ENCODE measurements at regions of chr12 and their contacts with region 1.

Region 1: GRCh38 chr12:76083904-76084862 is at the start of gene NAP1L1:
- DNase-seq: peak; percentile 98
- ATAC-seq: peak; percentile 87
- H3K4me3 ChIP-seq: peak within 1 kb of the TSS; percentile 82
- H3K27ac ChIP-seq: peak within 1 kb of the TSS; percentile 94
- H3K4me1 ChIP-seq: peaks cover 4% of the 10 kb centered on the region
- H3K27me3 ChIP-seq: no peaks in the 10 kb centered on the region
- CTCF ChIP-seq: peak; percentile 17; the same call in 1 of the 2 replicates
- POLR2A ChIP-seq: peak; percentile 96
- RAD21 ChIP-seq: peak; percentile 34
- total RNA-seq, gene NAP1L1: 86.4 and 166 TPM in 2 replicates

Region 2: DNA sequence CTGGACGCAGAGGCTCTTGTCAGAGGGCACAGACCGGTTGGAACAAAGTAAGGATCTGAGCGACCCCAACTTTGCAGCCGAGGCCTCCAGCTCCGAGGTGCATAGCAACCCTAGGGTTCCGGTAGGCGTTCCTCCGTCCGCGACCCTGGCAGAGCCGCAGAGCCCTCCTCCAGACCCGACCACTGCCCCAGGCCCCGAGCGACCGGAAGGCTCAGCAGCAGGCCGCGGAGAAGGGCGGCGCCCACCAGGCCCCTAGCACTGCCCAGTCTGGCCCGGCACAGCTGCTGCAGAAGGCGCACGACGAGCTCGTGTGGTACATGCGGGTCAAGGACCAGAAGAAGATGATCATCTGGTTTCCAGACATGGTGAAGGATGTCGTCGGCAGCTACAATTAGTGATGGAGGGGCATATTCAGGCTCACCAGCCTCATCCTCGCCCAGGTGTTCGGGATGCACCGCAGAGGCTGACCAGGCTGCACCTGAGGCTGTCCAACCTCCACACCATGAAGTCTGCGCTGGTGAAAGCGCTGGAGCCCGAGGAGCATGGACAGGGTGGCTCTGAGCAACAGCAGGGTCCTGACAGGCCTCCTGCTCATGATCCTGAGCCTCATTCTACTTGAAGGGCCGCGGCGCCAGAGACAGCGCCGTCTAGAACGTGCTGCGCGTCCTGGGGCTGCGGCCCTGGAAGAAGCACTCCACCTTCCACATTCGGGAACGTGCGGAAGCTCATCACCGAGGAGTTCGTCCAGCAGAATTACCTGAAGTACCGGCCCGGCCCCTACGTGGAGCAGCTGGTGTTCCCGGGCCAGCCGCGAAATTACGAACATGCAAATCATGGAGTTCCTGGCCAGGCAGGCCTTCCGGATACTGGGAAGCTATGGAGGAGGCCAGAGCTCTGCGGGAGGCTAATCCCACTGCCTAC is 778.5 kb before region 1 on chr12:
- CTCF ChIA-PET with region 1: no interaction called
- POLR2A ChIA-PET with region 1: no interaction called
- dilution Hi-C with region 1: no loop called
- in situ Hi-C with region 1: no loop called
- intact Hi-C with region 1: no loop called
- DNase-seq: no peak
- ATAC-seq: no peak
- H3K4me3 ChIP-seq: no peak overlapping the region
- H3K27ac ChIP-seq: no peak overlapping the region
- H3K4me1 ChIP-seq: no peaks in the 10 kb centered on the region
- H3K27me3 ChIP-seq: no peaks in the 10 kb centered on the region
- CTCF ChIP-seq: no peak
- POLR2A ChIP-seq: no peak
- RAD21 ChIP-seq: no peak

Region 3: DNA sequence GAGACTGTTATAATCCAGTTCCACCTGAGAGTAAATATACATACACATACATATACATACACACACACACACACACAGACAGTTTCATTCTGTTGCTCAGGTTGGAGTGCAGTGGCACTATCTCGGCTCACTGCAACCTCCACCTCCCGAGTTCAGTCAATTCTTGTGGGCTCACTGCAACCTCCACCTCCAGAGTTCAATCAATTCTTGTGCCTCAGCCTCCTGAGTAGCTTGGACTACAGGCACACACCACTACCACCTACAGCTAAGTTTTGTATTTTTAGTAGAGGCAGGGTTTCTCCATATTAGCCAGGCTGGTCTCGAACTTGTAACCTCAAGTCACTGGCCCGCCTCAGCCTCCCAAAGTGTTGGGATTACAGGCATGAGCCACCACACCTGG is 43.7 kb before region 1 on chr12:
- CTCF ChIA-PET with region 1: no interaction called
- POLR2A ChIA-PET with region 1: no interaction called
- dilution Hi-C with region 1: no loop called
- in situ Hi-C with region 1: no loop called
- intact Hi-C with region 1: no loop called
- DNase-seq: no peak
- ATAC-seq: no peak
- H3K4me3 ChIP-seq: no peak overlapping the region
- H3K27ac ChIP-seq: no peak overlapping the region
- H3K4me1 ChIP-seq: peaks cover 4% of the 10 kb centered on the region
- H3K27me3 ChIP-seq: no peaks in the 10 kb centered on the region
- CTCF ChIP-seq: no peak
- POLR2A ChIP-seq: no peak
- RAD21 ChIP-seq: no peak

Region 4: DNA sequence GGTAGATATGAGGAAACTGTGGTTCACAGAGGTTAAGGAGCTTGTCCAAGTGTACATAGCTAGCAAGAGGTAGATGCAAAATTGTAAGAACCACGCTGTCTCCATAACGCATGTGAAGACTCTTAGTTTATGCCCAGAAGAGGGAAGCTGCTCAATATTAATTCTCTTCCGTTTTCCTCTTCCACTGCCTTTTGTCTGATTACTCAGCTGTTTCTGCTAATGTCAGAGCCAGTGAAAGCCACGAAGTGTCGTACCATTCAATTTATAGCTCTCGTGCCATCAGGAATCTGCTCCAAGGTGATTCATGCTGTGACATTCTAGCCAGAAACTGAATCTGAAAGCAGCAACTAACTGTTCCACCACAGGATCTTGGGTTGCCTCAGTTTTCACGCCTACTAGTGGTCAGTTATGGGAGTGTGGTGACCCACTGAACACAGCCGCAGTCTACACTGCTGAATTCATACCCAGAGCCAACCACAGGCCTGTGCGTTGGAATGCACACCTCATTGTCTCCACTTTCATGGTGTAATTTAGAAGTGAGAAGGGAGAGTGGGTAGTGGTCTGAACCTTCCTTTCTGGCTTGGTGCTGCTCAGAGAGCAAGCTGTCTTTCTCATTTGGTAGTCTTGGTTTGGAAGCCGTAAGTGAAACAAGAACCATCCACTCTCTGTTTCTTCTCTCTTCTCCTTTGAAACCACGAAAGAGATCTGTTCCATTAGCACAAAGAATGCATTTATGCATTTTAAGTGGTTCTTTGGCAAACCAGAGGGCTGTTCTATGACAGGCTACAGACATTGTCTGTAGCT is 74.5 kb after region 1 on chr12:
- CTCF ChIA-PET with region 1: interaction called, 5 read pairs
- POLR2A ChIA-PET with region 1: no interaction called
- dilution Hi-C with region 1: no loop called
- in situ Hi-C with region 1: no loop called
- intact Hi-C with region 1: loop called (anchors 2 kb)
- DNase-seq: peak; percentile 84
- ATAC-seq: peak; percentile 97
- H3K4me3 ChIP-seq: no peak overlapping the region
- H3K27ac ChIP-seq: no peak overlapping the region
- H3K4me1 ChIP-seq: peaks cover 5% of the 10 kb centered on the region; the same call in 1 of the 2 replicates
- H3K27me3 ChIP-seq: no peaks in the 10 kb centered on the region
- CTCF ChIP-seq: peak; percentile 59
- POLR2A ChIP-seq: no peak
- RAD21 ChIP-seq: peak; percentile 70

Region 5: GRCh38 chr12:76277480-76277879 is 193.3 kb after region 1 on chr12:
- CTCF ChIA-PET with region 1: interaction called, 3 read pairs
- POLR2A ChIA-PET with region 1: no interaction called
- dilution Hi-C with region 1: no loop called
- in situ Hi-C with region 1: no loop called
- intact Hi-C with region 1: loop called (anchors 5 kb)
- DNase-seq: peak; percentile 87
- ATAC-seq: peak; percentile 72
- H3K4me3 ChIP-seq: no peak overlapping the region
- H3K27ac ChIP-seq: peak overlapping the region; percentile 52
- H3K4me1 ChIP-seq: peaks cover 27% of the 10 kb centered on the region
- H3K27me3 ChIP-seq: no peaks in the 10 kb centered on the region
- CTCF ChIP-seq: no peak
- POLR2A ChIP-seq: no peak
- RAD21 ChIP-seq: no peak

Region 6: GRCh38 chr12:76455582-76456345 is 371.6 kb after region 1 on chr12:
- CTCF ChIA-PET with region 1: no interaction called
- POLR2A ChIA-PET with region 1: no interaction called
- dilution Hi-C with region 1: no loop called
- in situ Hi-C with region 1: no loop called
- intact Hi-C with region 1: loop called (anchors 5 kb)
- DNase-seq: peak; percentile 95
- ATAC-seq: peak; percentile 95
- H3K4me3 ChIP-seq: no peak overlapping the region
- H3K27ac ChIP-seq: no peak overlapping the region
- H3K4me1 ChIP-seq: peaks cover 2% of the 10 kb centered on the region; the same call in 1 of the 2 replicates
- H3K27me3 ChIP-seq: no peaks in the 10 kb centered on the region
- CTCF ChIP-seq: peak; percentile 79
- POLR2A ChIP-seq: no peak
- RAD21 ChIP-seq: peak; percentile 83

Region 7: GRCh38 chr12:76586764-76587395 is 502.7 kb after region 1 on chr12:
- CTCF ChIA-PET with region 1: interaction called, 4 read pairs
- POLR2A ChIA-PET with region 1: no interaction called
- dilution Hi-C with region 1: no loop called
- in situ Hi-C with region 1: no loop called
- intact Hi-C with region 1: loop called (anchors 2 kb)
- DNase-seq: peak; percentile 67
- ATAC-seq: peak; percentile 55; the same call in 1 of the 2 replicates
- H3K4me3 ChIP-seq: no peak overlapping the region
- H3K27ac ChIP-seq: no peak overlapping the region
- H3K4me1 ChIP-seq: peaks cover 8% of the 10 kb centered on the region
- H3K27me3 ChIP-seq: no peaks in the 10 kb centered on the region
- CTCF ChIP-seq: peak; percentile 71
- POLR2A ChIP-seq: no peak
- RAD21 ChIP-seq: peak; percentile 68

Measured in IMR-90 (cell line).